Activated naive CD4-positive, alpha-beta T cell treated with anti-CD3 and anti-CD28 coated beads for 36 hours (primary cell): ENCODE measurements at regions of chr10 and their contacts with region 1.

Region 1: GRCh38 chr10:100912605-100913469 is at the start of gene SLF2:
- DNase-seq: peak; percentile 98
- H3K4me3 Mint-ChIP-seq: peak within 1 kb of the TSS; percentile 98
- H3K27ac Mint-ChIP-seq: peak within 1 kb of the TSS; percentile 99
- H3K4me1 Mint-ChIP-seq: peaks cover 42% of the 10 kb centered on the region
- H3K27me3 Mint-ChIP-seq: no peaks in the 10 kb centered on the region
- total RNA-seq, gene SLF2: 29.3 to 30.3 TPM

Region 2: GRCh38 chr10:100939763-100940344 is 27.0 kb after region 1 on chr10:
- CTCF ChIA-PET with region 1: interaction called, 4 read pairs
- intact Hi-C with region 1: loop called (anchors 1 kb)
- DNase-seq: no peak
- H3K4me3 Mint-ChIP-seq: no peak overlapping the region
- H3K27ac Mint-ChIP-seq: no peak overlapping the region
- H3K4me1 Mint-ChIP-seq: peaks cover 21% of the 10 kb centered on the region
- H3K27me3 Mint-ChIP-seq: no peaks in the 10 kb centered on the region

Region 3: DNA sequence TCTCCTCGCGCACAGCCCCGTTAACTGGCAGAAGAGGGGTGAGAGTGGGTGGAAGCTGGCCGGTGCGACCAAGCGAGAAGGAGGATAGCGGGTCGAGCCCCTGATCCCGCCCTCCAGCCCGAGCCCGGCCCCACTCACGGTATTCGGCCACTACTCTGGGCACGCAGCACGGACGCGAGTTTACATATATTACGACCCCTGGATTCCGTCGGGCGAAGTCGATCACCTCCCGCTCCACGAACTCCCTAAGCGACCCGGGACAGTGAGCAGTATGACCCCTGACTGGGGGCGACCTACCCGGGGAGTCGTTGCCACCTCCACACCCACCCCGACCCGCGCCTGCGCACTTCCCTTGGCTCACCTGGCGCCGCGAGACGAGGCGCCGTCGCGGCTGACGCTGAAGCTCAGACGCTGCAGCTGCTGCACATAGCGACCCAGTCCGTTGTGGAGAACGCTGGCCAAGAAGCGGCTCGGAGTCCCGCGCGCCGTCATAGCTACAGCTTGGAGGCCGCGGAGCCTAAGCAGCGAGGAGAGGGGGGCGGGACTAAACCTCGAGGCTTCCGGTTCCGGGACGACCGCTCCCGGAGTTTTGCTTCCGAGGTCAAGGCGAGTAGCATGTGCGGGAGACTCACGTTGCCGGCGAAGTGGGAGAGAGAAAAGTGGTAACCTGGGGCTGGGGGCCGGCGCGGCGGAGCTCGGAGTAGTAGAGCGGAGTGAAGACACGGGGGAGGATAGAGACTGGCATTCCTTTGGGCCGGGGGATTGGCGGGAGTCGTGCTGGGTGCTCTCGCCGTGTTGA is 74.3 kb after region 1 on chr10 and contains the starts of genes MRPL43 and TWNK:
- CTCF ChIA-PET with region 1: no interaction called
- intact Hi-C with region 1: loop called (anchors 2 kb)
- DNase-seq: peak; percentile 91
- H3K4me3 Mint-ChIP-seq: peak within 1 kb of the TSS; percentile 91
- H3K27ac Mint-ChIP-seq: peak within 1 kb of the TSS; percentile 72
- H3K4me1 Mint-ChIP-seq: peaks cover 51% of the 10 kb centered on the region
- H3K27me3 Mint-ChIP-seq: no peaks in the 10 kb centered on the region
- total RNA-seq, gene MRPL43: 45.0 to 47.3 TPM
- total RNA-seq, gene TWNK: 10.4 to 11.4 TPM